Activated CD8-positive, alpha-beta T cell treated with anti-CD3 and anti-CD28 coated beads for 36 hours (primary cell): ENCODE measurements at regions of chr11 and their contacts with region 1.

Region 1: GRCh38 chr11:10808553-10809372 is at the start of gene EIF4G2:
- DNase-seq: peak; percentile 97
- ATAC-seq: peak; percentile 95
- H3K4me3 Mint-ChIP-seq: peak within 1 kb of the TSS; percentile 94
- H3K27ac Mint-ChIP-seq: peak within 1 kb of the TSS; percentile 98
- H3K4me1 Mint-ChIP-seq: peaks cover 33% of the 10 kb centered on the region
- H3K27me3 Mint-ChIP-seq: no peaks in the 10 kb centered on the region
- CTCF ChIP-seq: no peak
- total RNA-seq, gene EIF4G2: 757 to 842 TPM

Region 2: GRCh38 chr11:10556590-10556989 is 252.2 kb before region 1 on chr11:
- CTCF ChIA-PET with region 1: no interaction called
- POLR2A ChIA-PET with region 1: no interaction called
- intact Hi-C with region 1: no loop called
- DNase-seq: no peak
- ATAC-seq: no peak
- H3K4me3 Mint-ChIP-seq: no peak overlapping the region
- H3K27ac Mint-ChIP-seq: no peak overlapping the region
- H3K4me1 Mint-ChIP-seq: no peaks in the 10 kb centered on the region
- H3K27me3 Mint-ChIP-seq: no peaks in the 10 kb centered on the region
- CTCF ChIP-seq: no peak

Region 3: DNA sequence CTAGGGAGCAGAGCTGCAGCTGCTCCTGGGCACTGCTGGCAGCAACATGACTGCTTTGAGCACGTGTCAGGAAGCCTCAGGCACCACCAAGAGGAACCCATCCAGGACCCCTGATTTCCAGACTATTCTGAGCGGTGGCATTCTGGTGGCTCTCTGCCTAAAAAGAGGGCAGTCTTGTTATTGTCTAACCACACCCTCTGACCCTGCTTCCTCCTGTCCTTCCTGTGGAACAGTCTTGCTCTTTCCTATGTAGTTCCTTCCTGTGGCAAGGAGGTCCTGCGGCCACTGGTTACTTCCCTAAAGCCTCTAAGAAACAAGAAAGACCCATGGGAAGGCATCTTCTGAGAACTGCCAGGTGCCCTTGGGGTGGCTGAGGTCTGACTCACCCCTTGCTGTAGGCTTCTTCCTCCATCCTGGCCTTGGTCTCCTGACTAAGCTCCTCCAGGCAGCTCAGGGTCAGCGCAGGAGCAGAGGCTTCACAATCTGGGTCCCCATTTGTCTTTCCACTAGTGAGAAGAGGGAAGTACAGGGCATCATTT is 227.2 kb before region 1 on chr11:
- CTCF ChIA-PET with region 1: no interaction called
- POLR2A ChIA-PET with region 1: no interaction called
- intact Hi-C with region 1: no loop called
- DNase-seq: no peak
- ATAC-seq: no peak
- H3K4me3 Mint-ChIP-seq: no peak overlapping the region
- H3K27ac Mint-ChIP-seq: no peak overlapping the region
- H3K4me1 Mint-ChIP-seq: no peaks in the 10 kb centered on the region
- H3K27me3 Mint-ChIP-seq: peaks cover 1% of the 10 kb centered on the region
- CTCF ChIP-seq: no peak

Region 4: DNA sequence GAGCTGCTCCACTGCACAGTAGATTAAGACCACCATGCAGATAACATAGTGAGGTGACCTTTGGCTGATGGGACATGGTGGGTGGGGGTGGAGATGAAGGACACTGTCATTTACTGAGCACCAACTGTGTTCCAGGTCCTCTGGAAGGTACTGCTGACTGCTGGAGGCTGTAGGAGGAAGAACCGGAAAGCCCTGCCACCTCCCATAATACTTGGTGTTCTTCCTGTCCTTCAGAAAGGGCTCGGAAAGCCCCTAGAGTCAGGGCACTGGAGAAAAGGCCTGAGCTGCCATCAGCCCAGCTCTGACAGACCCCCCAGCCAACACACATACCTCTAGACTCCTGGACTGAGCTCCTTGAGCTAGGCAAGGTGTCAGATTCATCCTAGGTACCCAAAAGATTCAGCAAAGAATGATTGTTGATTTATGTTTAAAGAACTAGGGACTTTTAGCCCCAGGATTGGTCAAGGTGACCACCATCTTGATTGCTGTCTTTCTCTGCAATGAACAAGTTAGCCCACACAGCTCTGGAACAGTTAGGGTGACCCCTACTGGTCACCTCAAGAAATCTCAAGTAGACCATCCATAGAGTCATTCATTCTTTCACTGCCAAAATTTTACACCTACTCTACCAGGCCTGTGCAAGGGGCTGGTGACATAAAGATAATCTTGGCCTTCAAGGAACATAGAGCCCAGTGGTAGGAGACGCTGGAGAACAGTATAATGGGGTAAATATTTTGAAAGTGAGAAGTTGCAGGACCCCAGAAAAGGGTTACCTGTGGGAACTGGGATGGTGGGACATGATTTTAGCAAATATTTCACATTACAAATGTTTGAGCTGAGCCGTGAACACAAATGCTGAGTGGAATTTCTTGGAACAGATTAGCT is 154.6 kb before region 1 on chr11:
- CTCF ChIA-PET with region 1: no interaction called
- POLR2A ChIA-PET with region 1: no interaction called
- intact Hi-C with region 1: no loop called
- DNase-seq: peak; percentile 46
- ATAC-seq: peak; percentile 64
- H3K4me3 Mint-ChIP-seq: no peak overlapping the region
- H3K27ac Mint-ChIP-seq: no peak overlapping the region
- H3K4me1 Mint-ChIP-seq: peaks cover 21% of the 10 kb centered on the region
- H3K27me3 Mint-ChIP-seq: no peaks in the 10 kb centered on the region
- CTCF ChIP-seq: peak; percentile 79

Region 5: GRCh38 chr11:10750838-10751580 is 57.8 kb before region 1 on chr11 and contains the start of gene CTR9:
- CTCF ChIA-PET with region 1: no interaction called
- POLR2A ChIA-PET with region 1: interaction called, 12 read pairs
- intact Hi-C with region 1: no loop called
- DNase-seq: peak; percentile 95
- ATAC-seq: peak; percentile 91
- H3K4me3 Mint-ChIP-seq: peak within 1 kb of the TSS; percentile 96
- H3K27ac Mint-ChIP-seq: peak within 1 kb of the TSS; percentile 90
- H3K4me1 Mint-ChIP-seq: peaks cover 23% of the 10 kb centered on the region
- H3K27me3 Mint-ChIP-seq: no peaks in the 10 kb centered on the region
- CTCF ChIP-seq: no peak
- total RNA-seq, gene CTR9: 35.9 to 37.1 TPM

Region 6: DNA sequence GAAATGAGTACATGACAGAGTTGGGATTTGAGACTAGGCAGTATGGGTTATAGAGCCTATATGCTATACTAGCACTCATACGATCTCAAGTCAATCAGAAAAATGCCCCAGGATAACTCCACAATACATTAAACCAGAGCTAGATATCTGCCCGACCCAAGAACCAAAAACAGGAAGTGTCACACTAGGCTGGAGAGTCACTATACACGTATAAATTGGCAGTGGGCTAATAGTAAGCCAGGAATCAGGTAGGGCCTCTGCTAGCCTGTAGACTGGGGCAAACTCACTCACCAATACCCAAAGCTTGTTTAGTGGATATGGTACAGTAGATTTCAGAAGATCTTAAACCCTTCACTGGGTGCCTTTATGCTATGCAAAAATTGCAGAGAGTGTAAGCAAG is 16.1 kb after region 1 on chr11:
- CTCF ChIA-PET with region 1: no interaction called
- POLR2A ChIA-PET with region 1: interaction called, 12 read pairs
- intact Hi-C with region 1: no loop called
- DNase-seq: no peak
- ATAC-seq: no peak
- H3K4me3 Mint-ChIP-seq: no peak overlapping the region
- H3K27ac Mint-ChIP-seq: no peak overlapping the region
- H3K4me1 Mint-ChIP-seq: peaks cover 5% of the 10 kb centered on the region
- H3K27me3 Mint-ChIP-seq: no peaks in the 10 kb centered on the region
- CTCF ChIP-seq: no peak

Region 7: DNA sequence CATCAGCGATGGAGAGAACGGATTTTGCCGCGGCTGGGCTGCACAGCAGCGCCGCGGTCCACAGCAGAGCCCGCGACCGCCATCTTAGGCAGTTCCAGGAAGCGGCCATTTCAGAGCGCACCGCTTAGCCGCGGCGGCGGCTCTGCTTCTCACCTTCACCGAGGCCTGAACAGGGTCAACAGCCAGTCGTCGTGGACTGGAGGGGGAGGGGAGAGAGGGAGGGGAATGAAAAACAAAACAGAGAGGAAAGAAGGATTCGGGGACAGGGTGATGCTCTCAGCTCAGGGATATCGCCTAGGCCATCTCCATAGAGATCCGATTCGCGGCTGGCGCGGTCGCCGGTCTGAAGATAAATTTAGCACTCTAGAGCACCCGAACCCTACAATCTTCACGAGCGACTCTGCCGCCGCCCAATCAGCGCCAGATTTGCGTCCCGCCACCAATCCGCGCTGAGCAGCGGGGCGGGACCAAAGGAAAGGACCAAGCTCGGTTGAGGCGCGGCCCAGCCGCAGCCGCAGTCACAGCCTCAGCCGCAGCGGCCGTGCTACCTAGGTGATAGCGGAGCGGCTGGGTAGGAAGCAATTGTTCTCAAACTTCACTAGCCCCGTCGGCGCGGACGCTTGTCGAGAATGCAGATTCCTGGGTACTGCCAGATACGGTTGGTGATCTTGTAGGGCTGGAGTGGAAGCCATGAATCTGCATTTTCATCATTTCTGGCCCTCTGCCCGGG is 49.1 kb after region 1 on chr11 and contains the start of gene ZBED5:
- CTCF ChIA-PET with region 1: interaction called, 15 read pairs
- POLR2A ChIA-PET with region 1: interaction called, 134 read pairs
- intact Hi-C with region 1: loop called (anchors 2 kb)
- DNase-seq: peak; percentile 97
- ATAC-seq: peak; percentile 94
- H3K4me3 Mint-ChIP-seq: peak within 1 kb of the TSS; percentile 97
- H3K27ac Mint-ChIP-seq: peak within 1 kb of the TSS; percentile 98
- H3K4me1 Mint-ChIP-seq: peaks cover 38% of the 10 kb centered on the region
- H3K27me3 Mint-ChIP-seq: no peaks in the 10 kb centered on the region
- CTCF ChIP-seq: no peak
- total RNA-seq, gene ZBED5: 35.7 to 36.7 TPM

Region 8: DNA sequence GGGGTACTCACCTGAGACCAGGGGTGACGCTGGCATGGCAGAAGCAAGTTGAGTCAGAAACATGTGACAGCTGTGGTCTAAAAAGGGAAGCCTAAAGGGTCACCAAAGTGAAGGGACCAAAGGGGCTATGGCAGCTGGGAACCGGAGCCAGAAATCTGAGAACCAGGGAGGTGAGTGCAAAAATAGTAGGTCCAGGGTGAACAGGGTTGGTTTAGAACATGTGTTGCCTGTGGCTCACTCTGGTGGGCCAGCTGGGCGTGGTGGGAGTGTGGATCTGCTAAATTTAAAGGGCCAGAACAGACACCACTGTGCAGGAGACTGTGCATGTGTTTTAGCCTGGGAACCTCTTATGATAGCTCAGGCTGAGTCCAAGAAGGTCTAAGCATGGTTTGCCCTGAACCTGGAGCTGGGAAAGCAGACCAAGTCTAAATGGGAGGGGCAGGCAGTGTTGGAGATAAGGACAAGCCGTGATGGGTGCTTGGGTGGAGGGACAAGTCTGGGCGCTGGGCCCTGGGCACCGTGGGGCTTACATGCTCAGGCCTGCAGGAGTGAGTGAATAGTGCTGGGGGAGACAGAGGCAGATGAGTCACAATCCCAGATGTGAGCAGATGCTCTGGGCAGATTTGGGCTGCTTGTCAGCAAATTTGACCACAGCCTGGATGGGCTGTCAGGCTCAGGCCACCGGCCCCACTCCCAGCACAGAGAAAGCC is 90.5 kb after region 1 on chr11:
- CTCF ChIA-PET with region 1: no interaction called
- POLR2A ChIA-PET with region 1: interaction called, 26 read pairs
- intact Hi-C with region 1: no loop called
- DNase-seq: peak; percentile 32
- ATAC-seq: peak; percentile 60
- H3K4me3 Mint-ChIP-seq: no peak overlapping the region
- H3K27ac Mint-ChIP-seq: peak overlapping the region; percentile 87
- H3K4me1 Mint-ChIP-seq: peaks cover 28% of the 10 kb centered on the region
- H3K27me3 Mint-ChIP-seq: no peaks in the 10 kb centered on the region
- CTCF ChIP-seq: no peak